ENCODE measurements at regions of chr10 and their contacts with region 1.

Region 1: GRCh38 chr10:13775786-13776780 is 189.3 kb downstream of the PRPF18 start:
- DNase-seq: no peak
- H3K4me3 ChIP-seq: no peak overlapping the region
- H3K27ac ChIP-seq: peak overlapping the region in 1 of 8 donors; percentile 26
- H3K4me1 ChIP-seq: peaks cover 0 to 22% (median 6%) of the 10 kb centered on the region in 6 donors
- H3K27me3 ChIP-seq: peaks cover 0 to 32% (median 0%) of the 10 kb centered on the region in 7 donors
- CTCF ChIP-seq: no peak
- POLR2A ChIP-seq: no peak

Region 2: DNA sequence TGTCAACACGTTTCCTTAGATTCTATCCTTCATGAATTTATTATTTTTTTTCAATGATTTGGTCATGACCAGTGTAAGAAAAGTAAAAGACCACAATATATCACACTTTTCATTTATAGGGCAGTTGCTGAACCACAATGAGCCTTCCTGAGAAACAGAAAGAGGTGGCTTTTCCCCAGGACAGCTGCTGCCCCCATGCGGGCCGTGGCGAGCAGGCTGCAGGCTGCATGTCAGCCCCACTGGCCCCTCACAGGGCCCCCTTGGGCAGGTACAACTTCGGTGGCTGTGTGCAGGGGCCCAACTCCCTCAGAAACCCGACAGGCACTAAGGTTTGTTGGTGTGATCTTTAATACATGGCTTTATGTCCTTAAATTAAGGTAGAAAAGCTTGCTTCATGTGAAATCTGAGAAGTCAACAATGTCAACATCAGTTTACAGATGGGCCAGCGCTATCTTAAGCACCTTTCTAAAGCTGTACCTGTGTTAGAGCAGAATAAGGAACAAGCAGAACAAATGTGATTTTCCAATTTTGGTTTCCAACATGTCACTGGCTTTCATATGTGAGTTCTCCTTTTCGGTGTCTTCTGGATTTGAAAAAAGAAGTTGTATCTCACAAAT is 257.9 kb before region 1 on chr10:
- intact Hi-C with region 1: no loop called
- DNase-seq: no peak
- H3K4me3 ChIP-seq: no peak overlapping the region
- H3K27ac ChIP-seq: no peak overlapping the region
- H3K4me1 ChIP-seq: no peaks in the 10 kb centered on the region
- H3K27me3 ChIP-seq: no peaks in the 10 kb centered on the region
- CTCF ChIP-seq: peak in 1 of 11 experiments; percentile 30
- POLR2A ChIP-seq: no peak

Region 3: DNA sequence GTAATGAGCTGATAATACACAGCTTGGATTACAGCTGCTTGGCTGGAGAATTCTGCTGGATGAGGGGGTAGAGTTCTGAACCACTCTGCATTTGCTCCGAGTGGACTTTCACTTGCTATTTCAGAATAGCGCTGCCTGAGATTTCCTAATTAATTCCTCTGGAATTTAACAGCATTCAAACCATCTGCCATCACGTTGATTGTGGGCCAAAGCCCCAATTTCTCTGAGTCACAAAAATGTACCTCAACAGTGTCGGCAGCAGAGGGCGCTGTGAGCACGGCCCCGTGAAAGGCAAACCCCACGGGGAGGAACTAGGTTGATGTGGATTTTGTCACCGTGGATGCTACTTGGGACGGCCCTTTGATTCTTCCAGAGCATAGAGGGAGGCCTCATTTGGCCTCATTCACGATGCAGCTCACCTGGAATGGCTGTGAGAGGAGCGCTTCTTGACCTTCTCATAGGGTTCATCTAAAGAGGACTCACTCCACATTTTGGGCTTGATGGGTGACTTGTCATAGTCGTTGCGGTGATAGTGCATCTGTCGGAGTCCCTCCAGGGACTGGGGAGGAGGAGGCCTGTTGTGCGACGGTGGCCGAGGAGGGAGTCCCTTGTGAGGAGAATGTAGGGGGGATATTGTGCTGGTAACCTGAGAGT is 116.1 kb before region 1 on chr10:
- intact Hi-C with region 1: loop called (anchors 2 kb)
- DNase-seq: peak; percentile 90
- H3K4me3 ChIP-seq: no peak overlapping the region
- H3K27ac ChIP-seq: peak overlapping the region in 5 of 8 donors; percentile 25 to 58 (median 38)
- H3K4me1 ChIP-seq: peaks cover 0 to 31% (median 20%) of the 10 kb centered on the region in 6 donors
- H3K27me3 ChIP-seq: no peaks in the 10 kb centered on the region
- CTCF ChIP-seq: peak; percentile 44 to 89 (median 76)
- POLR2A ChIP-seq: no peak